ENCODE measurements at regions of chr7 and their contacts with region 1.

Region 1: GRCh38 chr7:73578342-73579127 is at the start of gene TBL2:
- DNase-seq: peak; percentile 99
- H3K4me3 Mint-ChIP-seq: peak within 1 kb of the TSS; percentile 87
- H3K27ac Mint-ChIP-seq: peak within 1 kb of the TSS; percentile 94
- H3K4me1 Mint-ChIP-seq: peaks cover 32% of the 10 kb centered on the region
- H3K27me3 Mint-ChIP-seq: no peaks in the 10 kb centered on the region
- total RNA-seq, gene TBL2: 21.5 to 23.6 TPM

Region 2: GRCh38 chr7:73522105-73522872 is 56.2 kb before region 1 on chr7 and contains the start of gene BAZ1B:
- CTCF ChIA-PET with region 1: interaction called, 6 read pairs
- intact Hi-C with region 1: loop called (anchors 1 kb)
- DNase-seq: peak; percentile 99
- H3K4me3 Mint-ChIP-seq: peak within 1 kb of the TSS; percentile 98
- H3K27ac Mint-ChIP-seq: peak within 1 kb of the TSS; percentile 96
- H3K4me1 Mint-ChIP-seq: peaks cover 55% of the 10 kb centered on the region
- H3K27me3 Mint-ChIP-seq: no peaks in the 10 kb centered on the region
- total RNA-seq, gene BAZ1B: 67.6 to 69.9 TPM

Region 3: GRCh38 chr7:73547841-73548240 is 30.7 kb before region 1 on chr7:
- CTCF ChIA-PET with region 1: no interaction called
- intact Hi-C with region 1: no loop called
- DNase-seq: no peak
- H3K4me3 Mint-ChIP-seq: no peak overlapping the region
- H3K27ac Mint-ChIP-seq: no peak overlapping the region
- H3K4me1 Mint-ChIP-seq: peaks cover 28% of the 10 kb centered on the region
- H3K27me3 Mint-ChIP-seq: no peaks in the 10 kb centered on the region

Region 4: DNA sequence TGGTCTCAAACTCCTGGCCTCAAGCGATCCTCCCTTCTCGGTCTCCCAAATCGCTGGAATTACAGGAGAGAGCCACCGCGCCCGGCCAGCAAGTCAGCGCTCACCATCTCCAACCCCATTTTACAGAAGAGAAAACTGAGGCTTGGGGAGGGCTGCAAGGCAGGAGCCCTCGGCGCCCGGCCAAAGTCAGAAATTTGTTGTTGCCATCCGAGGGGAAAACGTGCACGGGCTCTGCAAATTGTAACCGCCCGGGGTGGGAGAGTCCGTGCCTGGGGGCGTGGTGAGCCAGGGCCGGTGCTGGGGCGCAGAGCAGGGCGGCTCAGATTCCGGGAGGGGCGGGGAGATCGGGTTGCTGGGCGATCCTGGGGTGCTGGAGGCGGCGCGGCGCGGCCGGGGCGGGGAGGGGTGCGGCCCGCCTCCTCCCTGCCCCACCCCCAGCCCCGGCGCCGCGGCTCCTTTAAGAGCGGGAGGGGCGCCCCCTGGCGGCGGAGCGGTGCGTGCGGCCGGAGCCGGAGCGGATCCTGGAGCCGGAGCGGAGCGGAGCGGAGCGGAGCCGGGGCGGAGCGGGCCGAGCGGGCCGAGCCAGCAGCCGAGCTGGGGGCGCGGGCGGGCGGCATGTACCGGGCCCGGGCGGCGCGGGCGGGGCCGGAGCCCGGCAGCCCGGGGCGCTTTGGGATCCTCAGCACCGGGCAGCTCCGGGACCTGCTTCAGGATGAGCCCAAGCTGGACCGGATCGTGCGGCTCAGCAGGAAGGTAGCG is 89.0 kb after region 1 on chr7 and contains the start of gene VPS37D:
- CTCF ChIA-PET with region 1: no interaction called
- intact Hi-C with region 1: loop called (anchors 1 kb)
- DNase-seq: peak; percentile 91
- H3K4me3 Mint-ChIP-seq: peak within 1 kb of the TSS; percentile 63
- H3K27ac Mint-ChIP-seq: no peak within 1 kb of the TSS
- H3K4me1 Mint-ChIP-seq: peaks cover 8% of the 10 kb centered on the region
- H3K27me3 Mint-ChIP-seq: peaks cover 34% of the 10 kb centered on the region
- total RNA-seq, gene VPS37D: not detected

Region 5: DNA sequence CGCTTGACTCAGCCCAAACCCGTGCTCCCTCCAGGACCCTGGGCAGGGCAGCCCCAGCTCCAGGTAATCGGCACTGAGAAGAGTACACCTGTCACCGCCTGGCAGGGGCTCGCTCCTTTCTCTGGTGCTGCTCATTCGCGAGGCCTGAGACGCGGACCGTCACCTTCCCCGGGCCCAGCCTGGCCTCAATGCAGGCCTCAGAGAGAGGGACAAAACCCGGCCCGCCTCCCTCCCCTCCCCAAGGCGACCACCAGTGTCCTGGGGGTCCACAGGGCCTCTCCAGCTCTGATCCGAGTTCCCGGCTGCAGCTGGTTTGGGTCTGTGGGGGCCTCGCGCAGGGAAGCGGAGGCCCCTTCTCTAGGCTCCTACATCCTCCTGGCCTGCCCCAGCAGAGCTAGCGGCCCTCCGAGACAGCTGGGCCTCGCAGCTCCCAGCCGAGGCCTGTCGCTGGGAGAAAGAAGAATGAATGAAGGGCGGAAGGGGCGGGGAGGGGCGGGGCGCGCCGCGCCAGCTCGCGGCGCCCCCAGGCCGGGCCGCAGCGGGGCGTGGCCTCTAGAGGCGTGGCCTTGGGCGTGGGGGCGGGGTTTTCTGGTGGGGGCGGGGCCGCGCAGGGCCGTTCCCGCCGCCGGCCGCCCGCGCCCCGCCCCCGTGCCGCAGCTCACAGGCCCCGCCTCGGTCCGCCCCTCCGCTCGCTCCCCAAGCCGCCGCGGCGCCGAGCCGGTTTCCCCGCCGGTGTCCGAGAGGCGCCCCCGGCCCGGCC is 504.8 kb after region 1 on chr7 and contains the start of gene LIMK1:
- CTCF ChIA-PET with region 1: no interaction called
- intact Hi-C with region 1: loop called (anchors 2 kb)
- DNase-seq: peak; percentile 80
- H3K4me3 Mint-ChIP-seq: peak within 1 kb of the TSS; percentile 78
- H3K27ac Mint-ChIP-seq: peak within 1 kb of the TSS; percentile 76
- H3K4me1 Mint-ChIP-seq: peaks cover 10% of the 10 kb centered on the region
- H3K27me3 Mint-ChIP-seq: no peaks in the 10 kb centered on the region
- total RNA-seq, gene LIMK1: 7.9 to 9.2 TPM